Uterus (tissue), 4 donors: ENCODE measurements at regions of chr12 and their contacts with region 1.

Region 1: DNA sequence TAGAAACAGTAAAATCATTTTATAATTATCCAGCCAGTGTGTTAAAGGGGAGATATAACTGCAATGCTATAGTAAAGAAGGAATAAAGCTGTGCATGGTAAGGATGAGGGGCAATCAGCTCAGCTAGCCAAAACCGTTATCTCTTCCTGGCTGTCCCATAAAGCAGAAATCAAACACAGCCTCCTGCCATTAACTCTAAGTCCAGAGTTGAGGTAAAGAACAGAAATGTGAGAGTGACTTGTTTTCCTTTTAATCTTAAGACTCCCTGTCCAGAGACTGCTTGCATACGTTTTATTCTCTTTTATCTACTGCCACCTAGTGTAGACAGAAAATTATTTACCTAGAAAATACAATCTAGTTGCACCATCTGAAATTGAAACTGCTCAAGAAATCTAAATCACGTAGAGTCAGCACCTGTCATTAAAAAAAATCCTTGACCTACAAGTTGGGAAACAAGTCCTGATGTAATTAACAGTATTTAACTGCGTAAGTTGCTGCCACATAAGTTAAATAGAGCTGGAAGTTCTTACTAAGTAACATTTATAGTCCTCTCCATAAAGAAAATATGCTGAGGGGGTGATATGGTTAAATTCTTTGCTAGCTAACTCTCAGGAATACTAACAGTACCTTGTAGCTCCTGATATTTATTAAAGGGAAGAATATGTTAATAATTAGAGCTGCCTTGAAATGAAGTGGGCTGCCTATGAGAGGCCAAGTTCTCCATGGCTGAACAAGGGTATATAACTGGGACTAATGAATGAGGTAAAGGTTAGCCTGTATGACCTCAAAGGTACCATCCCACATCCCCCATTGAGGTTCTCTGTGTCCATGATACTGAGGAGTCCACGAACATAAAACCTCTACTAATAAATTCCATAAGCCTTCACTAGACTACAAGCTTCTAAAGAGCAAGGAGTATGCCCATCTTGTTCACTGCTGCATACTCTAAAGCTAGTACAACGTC is 62.7 kb downstream of the GALNT4 start:
- DNase-seq: no peak
- H3K4me3 ChIP-seq: no peak overlapping the region
- H3K27ac ChIP-seq: peak overlapping the region; percentile 51 to 59
- H3K4me1 ChIP-seq: no peaks in the 10 kb centered on the region
- H3K27me3 ChIP-seq: no peaks in the 10 kb centered on the region
- CTCF ChIP-seq: peak; percentile 58 to 81 (median 72)
- POLR2A ChIP-seq: no peak

Region 2: DNA sequence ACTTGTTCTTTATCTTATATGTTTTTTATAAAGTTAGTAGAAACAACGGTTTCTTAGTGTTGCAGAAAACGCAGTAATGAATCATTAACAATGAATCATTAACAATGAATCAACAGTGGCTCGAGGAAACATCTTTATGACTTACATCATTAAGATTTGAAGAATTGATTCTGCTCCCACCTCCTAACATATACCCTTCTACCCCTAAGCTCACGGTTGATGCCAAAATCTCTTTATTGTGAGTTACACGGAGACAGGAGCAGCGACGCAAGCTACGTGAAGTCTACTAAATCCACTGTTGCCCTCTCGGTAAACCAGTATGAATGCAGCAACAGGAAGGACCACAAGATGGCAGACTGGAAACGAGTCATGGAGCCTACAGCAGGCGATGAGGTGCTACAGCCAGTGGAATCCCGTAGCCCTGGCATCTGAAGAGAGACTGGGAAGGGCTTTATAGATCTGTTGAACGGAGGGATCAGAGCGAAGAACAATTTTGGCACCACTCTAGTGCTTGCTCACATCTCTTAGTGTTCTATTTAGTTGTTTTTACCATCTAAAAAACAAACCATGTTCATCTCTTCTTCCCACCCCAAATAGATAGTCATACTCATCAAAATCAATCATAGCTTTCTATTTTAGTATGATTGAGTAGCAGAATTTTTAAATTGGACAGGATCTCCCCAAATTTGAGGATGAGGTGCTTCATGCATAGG is 442.4 kb before region 1 on chr12:
- intact Hi-C with region 1: loop called (anchors 5 kb)
- DNase-seq: peak; percentile 70 to 80
- H3K4me3 ChIP-seq: peak overlapping the region in 1 of 2 donors; percentile 23
- H3K27ac ChIP-seq: no peak overlapping the region
- H3K4me1 ChIP-seq: peaks cover 0 to 4% of the 10 kb centered on the region in 2 donors
- H3K27me3 ChIP-seq: no peaks in the 10 kb centered on the region
- CTCF ChIP-seq: peak; percentile 72 to 90 (median 88)
- POLR2A ChIP-seq: no peak